Upper lobe of right lung (tissue), 1 donor: ENCODE measurements at regions of chr22 and their contacts with region 1.

Region 1: GRCh38 chr22:46110215-46110614 is 40.1 kb upstream of the PPARA start:
- DNase-seq: no peak
- ATAC-seq: no peak
- H3K4me3 ChIP-seq: no peak overlapping the region
- H3K27ac ChIP-seq: peak overlapping the region; percentile 49
- H3K4me1 ChIP-seq: peaks cover 65% of the 10 kb centered on the region
- H3K27me3 ChIP-seq: no peaks in the 10 kb centered on the region
- CTCF ChIP-seq: no peak

Region 2: DNA sequence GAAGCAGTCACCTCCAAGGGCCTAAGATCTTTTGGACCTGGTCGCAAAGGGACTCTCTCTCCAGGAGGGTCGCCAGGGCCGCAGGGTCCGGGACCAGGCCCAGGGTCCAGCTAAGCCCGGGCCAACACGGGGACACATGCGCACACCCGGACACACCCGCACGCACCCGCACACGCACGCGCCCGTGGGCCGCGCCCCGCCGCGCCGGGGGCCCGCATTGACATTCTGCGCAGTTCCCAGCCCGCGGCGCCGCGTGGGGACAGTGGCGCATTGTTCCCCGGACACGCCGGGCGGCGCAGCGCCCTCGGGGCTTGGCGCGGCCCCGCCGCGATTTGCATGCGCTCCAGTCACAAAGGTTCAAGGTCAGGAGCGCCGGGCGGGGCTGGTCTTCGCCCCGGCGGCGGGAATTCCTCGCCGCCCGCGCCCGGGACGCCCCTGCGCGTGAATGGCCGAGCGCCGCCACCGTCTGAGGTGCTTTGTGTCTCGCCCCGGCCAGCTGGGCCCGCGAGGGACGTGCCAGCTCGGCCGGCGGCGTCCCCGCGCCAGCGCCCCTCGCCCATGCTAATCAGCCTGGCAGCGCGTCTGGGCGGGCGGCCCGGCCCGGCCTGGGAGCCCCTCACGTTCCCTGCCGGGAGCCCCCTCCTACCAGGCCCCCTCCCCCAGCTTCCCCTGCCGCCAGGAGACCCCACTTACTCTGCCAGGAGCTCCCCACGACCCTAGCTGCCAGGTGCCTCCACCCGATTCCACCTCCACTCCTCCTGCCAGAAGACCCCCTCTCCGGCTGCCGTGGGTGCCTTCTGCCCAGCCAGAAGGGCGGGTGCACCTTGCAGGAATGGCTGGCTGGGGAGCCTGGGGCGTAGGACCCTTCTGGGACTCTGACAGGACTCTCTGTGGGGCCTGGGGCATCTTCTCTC is 82.8 kb before region 1 on chr22:
- intact Hi-C with region 1: no loop called
- DNase-seq: peak; percentile 87
- ATAC-seq: peak; percentile 86
- H3K4me3 ChIP-seq: peak overlapping the region; percentile 52
- H3K27ac ChIP-seq: peak overlapping the region; percentile 61
- H3K4me1 ChIP-seq: peaks cover 9% of the 10 kb centered on the region
- H3K27me3 ChIP-seq: no peaks in the 10 kb centered on the region
- CTCF ChIP-seq: peak; percentile 19

Region 3: DNA sequence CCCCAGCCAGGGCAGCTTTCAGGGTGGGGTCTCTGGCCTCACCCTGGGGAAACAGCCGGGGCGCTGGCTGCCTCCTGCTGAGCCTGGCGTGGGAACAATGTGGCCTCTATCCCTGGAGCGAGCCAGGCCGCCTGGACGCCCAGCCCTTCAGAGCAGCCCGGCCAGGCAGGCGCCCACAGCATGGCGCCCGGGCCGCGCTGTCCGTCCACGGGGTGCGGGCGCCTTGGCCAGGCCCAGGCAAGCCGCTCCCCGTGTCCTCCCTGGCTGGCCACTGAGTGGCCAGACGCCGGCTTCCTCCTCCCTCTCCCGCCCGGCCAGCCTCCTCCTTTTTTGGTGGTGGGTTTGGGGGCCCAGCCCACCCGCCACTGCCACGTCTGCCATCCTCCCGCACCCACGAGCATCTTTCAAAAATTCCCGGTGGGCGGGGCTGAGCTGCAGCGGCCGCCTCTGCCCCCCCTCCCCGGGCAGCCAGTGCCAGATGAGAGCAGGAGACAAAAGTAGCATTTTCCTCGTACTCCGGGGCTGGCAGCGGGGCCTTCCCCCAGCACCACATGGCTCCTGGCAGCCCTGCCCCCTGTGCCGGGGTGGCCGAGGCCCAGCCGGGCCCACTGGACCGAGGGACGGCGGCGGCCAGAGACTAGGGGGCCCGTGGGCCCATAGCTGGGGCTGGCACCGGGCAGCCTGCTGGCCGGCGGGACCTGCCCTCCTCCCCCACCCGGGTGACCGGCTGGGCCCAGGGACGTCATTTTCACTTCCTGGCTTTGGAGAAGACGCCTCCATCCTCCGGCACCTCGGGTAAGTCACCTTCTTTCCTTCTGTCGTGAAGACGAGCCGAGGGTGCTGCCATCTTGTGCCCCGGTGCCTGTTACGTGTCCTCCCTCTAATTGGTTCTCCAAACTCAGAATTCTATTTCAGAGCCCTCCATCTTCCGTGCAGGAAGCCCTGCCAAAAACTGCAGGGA is 30.1 kb before region 1 on chr22:
- intact Hi-C with region 1: loop called (anchors 5 kb)
- DNase-seq: peak; percentile 74
- ATAC-seq: peak; percentile 46
- H3K4me3 ChIP-seq: peak overlapping the region; percentile 89
- H3K27ac ChIP-seq: peak overlapping the region; percentile 98
- H3K4me1 ChIP-seq: peaks cover 71% of the 10 kb centered on the region
- H3K27me3 ChIP-seq: no peaks in the 10 kb centered on the region
- CTCF ChIP-seq: no peak

Region 4: DNA sequence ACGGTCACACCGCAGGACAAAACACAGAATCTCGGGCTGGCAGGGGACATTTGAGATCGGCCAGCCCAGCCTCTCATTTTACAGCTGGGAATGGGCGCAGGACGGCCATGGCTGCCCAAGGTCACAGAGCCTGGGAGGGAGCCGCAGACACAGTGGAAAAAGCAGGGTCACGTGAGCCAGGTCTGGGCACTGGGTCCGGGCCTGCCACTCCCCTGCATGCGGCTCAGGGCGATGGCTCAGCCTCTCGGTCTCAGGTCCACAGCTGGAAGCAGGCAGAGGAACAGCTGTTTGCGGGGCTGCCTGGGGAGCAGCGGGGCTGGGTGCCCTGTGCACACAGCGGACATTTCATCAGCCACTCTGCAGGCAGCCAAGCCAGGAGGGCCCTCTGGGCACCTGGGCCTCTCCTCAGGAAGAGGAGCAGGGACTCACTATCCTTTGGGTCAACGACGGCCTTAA is 29.7 kb after region 1 on chr22:
- intact Hi-C with region 1: no loop called
- DNase-seq: no peak
- ATAC-seq: no peak
- H3K4me3 ChIP-seq: no peak overlapping the region
- H3K27ac ChIP-seq: peak overlapping the region; percentile 66
- H3K4me1 ChIP-seq: peaks cover 3% of the 10 kb centered on the region
- H3K27me3 ChIP-seq: no peaks in the 10 kb centered on the region
- CTCF ChIP-seq: no peak

Region 5: GRCh38 chr22:46150034-46150654 is 39.9 kb after region 1 on chr22 and contains the start of gene PPARA:
- intact Hi-C with region 1: no loop called
- DNase-seq: peak; percentile 96
- ATAC-seq: peak; percentile 96
- H3K4me3 ChIP-seq: peak within 1 kb of the TSS; percentile 94
- H3K27ac ChIP-seq: peak within 1 kb of the TSS; percentile 89
- H3K4me1 ChIP-seq: peaks cover 24% of the 10 kb centered on the region
- H3K27me3 ChIP-seq: no peaks in the 10 kb centered on the region
- CTCF ChIP-seq: no peak
- total RNA-seq, gene PPARA: 18.4 TPM